Heart right ventricle (tissue), 16 donors: ENCODE measurements at regions of chr12 and their contacts with region 1.

Region 1: DNA sequence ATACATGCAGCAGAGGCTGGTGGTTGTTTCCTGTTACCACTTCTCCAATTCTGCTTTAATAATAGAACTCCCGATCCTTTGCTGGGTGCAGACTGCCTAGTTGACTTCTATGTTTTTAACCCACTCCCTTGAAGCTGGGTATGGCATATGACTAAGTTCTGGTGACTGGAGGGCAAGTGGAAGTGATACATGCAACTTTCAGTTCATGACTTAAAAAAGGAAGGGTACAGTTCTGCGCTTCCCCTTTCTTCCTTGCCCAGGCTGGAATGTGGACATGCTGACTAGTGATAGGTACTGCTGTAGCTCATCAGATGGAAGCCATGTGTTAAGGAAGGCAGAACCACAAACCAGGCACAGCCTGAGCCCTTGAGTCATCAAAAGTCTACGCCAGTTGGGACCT is 2.4 kb upstream of the A2M start:
- DNase-seq: no peak
- ATAC-seq: peak; percentile 10 to 54 (median 38)
- H3K4me3 ChIP-seq: no peak overlapping the region
- H3K27ac ChIP-seq: peak overlapping the region in 9 of 10 donors; percentile 79 to 94 (median 86)
- H3K4me1 ChIP-seq: peaks cover 8 to 64% (median 42%) of the 10 kb centered on the region in 9 donors
- H3K27me3 ChIP-seq: no peaks in the 10 kb centered on the region
- CTCF ChIP-seq: no peak

Region 2: DNA sequence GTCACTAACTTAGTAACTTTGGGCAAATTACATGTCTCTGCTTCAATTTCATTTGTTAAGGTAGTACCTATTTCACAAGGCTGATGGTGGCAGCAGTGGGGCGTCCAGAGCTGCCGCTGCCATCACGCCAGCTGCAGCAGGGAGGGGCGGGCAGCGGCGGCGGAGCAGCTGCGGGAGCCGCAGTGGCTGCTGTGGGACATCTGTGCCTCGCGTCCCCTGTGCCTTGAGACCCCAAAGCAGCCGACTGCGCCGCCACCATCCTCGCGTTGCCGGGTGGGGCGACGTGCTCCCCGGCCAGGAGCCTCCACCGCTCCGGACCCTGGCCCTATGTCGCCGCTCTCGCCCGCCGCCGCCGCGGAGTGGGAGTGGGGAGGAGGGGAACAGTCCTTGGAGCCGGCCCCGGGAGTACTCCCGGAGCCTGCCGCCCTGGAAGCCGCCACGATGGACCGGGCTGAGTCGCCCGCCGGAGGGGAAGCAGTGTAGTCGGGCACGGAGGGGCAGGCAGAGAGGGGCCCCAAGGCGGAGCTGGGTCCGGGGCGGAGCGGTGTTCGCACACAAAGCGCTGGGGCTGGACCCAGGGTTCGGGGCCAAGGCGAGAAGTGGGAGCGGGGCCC is 53.9 kb before region 1 on chr12:
- intact Hi-C with region 1: loop called in 1 of 10 experiments (anchors 5 kb)
- DNase-seq: peak; percentile 61
- ATAC-seq: peak; percentile 77 to 88 (median 87)
- H3K4me3 ChIP-seq: peak overlapping the region; percentile 70 to 98 (median 92)
- H3K27ac ChIP-seq: peak overlapping the region; percentile 94 to 99 (median 98)
- H3K4me1 ChIP-seq: peaks cover 4 to 24% (median 14%) of the 10 kb centered on the region in 9 donors
- H3K27me3 ChIP-seq: no peaks in the 10 kb centered on the region
- CTCF ChIP-seq: peak in 8 of 9 donors; percentile 40 to 68 (median 54)

Region 3: GRCh38 chr12:9163392-9163791 is 45.2 kb after region 1 on chr12:
- intact Hi-C with region 1: loop called in 3 of 10 experiments (anchors 2 to 5 kb)
- DNase-seq: peak in 1 of 2 donors; percentile 60
- ATAC-seq: peak; percentile 81 to 93 (median 88)
- H3K4me3 ChIP-seq: no peak overlapping the region
- H3K27ac ChIP-seq: peak overlapping the region in 9 of 10 donors; percentile 15 to 82 (median 72)
- H3K4me1 ChIP-seq: peaks cover 0 to 44% (median 11%) of the 10 kb centered on the region in 9 donors
- H3K27me3 ChIP-seq: no peaks in the 10 kb centered on the region
- CTCF ChIP-seq: no peak

Region 4: GRCh38 chr12:9169979-9170634 is 51.9 kb after region 1 on chr12:
- intact Hi-C with region 1: loop called in 2 of 10 experiments (anchors 2 kb)
- DNase-seq: peak; percentile 20 to 68
- ATAC-seq: peak; percentile 64 to 96 (median 87)
- H3K4me3 ChIP-seq: peak overlapping the region in 3 of 10 donors; percentile 10 to 27 (median 11)
- H3K27ac ChIP-seq: peak overlapping the region; percentile 26 to 89 (median 66)
- H3K4me1 ChIP-seq: peaks cover 0 to 51% (median 4%) of the 10 kb centered on the region in 9 donors
- H3K27me3 ChIP-seq: no peaks in the 10 kb centered on the region
- CTCF ChIP-seq: no peak

Region 5: GRCh38 chr12:9237286-9237685 is 119.1 kb after region 1 on chr12:
- intact Hi-C with region 1: loop called in 4 of 10 experiments (anchors 5 to 10 kb)
- DNase-seq: no peak
- ATAC-seq: no peak
- H3K4me3 ChIP-seq: no peak overlapping the region
- H3K27ac ChIP-seq: peak overlapping the region in 1 of 10 donors; percentile 27
- H3K4me1 ChIP-seq: peaks cover 0 to 14% (median 0%) of the 10 kb centered on the region in 9 donors
- H3K27me3 ChIP-seq: no peaks in the 10 kb centered on the region
- CTCF ChIP-seq: no peak

Region 6: DNA sequence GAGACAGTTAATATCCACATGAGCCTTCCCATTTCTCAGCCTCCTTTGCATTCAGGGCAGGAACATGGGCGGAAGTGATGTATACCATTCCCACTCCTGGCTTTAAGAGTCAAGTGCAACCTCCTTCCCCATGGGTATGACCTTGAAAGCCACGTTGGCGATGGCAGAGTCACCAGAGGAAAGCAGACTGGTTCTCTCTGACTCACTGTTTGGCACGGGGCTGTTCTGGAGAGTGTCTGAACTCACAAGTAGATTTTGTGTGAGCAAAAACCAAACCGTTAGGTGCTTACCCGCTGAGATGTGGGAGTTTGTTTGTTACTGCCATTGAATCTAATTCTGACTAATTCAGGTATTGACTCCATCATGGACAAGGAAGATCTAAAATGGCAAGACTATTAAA is 126.7 kb after region 1 on chr12:
- intact Hi-C with region 1: loop called in 3 of 10 experiments (anchors 5 kb)
- DNase-seq: peak in 1 of 2 donors; percentile 6
- ATAC-seq: peak in 1 of 8 donors; percentile 45
- H3K4me3 ChIP-seq: no peak overlapping the region
- H3K27ac ChIP-seq: peak overlapping the region in 2 of 10 donors; percentile 48 to 53
- H3K4me1 ChIP-seq: peaks cover 0 to 22% (median 0%) of the 10 kb centered on the region in 9 donors
- H3K27me3 ChIP-seq: no peaks in the 10 kb centered on the region
- CTCF ChIP-seq: no peak

Region 7: GRCh38 chr12:9276990-9277389 is 158.8 kb after region 1 on chr12:
- intact Hi-C with region 1: loop called in 1 of 10 experiments (anchors 10 kb)
- DNase-seq: no peak
- ATAC-seq: no peak
- H3K4me3 ChIP-seq: no peak overlapping the region
- H3K27ac ChIP-seq: no peak overlapping the region
- H3K4me1 ChIP-seq: no peaks in the 10 kb centered on the region
- H3K27me3 ChIP-seq: no peaks in the 10 kb centered on the region
- CTCF ChIP-seq: no peak